IMR-90 (cell line): ENCODE measurements at regions of chr21 and their contacts with region 1.

Region 1: DNA sequence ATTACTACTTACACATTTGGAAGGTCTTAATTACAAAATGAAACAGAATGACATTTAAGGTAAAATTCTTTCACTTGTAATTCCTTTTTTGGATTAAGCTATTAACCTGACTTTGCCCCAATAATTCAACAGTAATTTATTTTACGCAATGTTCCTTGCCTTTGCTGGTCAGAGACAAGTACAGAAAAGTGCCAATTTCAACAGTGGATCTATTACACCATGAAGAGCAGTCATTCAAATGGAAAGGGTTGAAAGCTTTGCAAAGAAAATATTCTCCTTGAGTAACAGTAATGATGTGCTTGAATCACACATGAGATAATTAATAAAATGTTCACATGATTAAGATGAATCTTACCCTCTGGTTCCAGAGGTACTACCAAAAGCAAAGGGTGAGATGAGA is 84.7 kb downstream of the APP start:
- DNase-seq: no peak
- ATAC-seq: no peak
- H3K4me3 ChIP-seq: no peak overlapping the region
- H3K27ac ChIP-seq: no peak overlapping the region
- H3K4me1 ChIP-seq: peaks cover 4% of the 10 kb centered on the region
- H3K27me3 ChIP-seq: no peaks in the 10 kb centered on the region
- CTCF ChIP-seq: no peak
- POLR2A ChIP-seq: no peak
- RAD21 ChIP-seq: no peak

Region 2: DNA sequence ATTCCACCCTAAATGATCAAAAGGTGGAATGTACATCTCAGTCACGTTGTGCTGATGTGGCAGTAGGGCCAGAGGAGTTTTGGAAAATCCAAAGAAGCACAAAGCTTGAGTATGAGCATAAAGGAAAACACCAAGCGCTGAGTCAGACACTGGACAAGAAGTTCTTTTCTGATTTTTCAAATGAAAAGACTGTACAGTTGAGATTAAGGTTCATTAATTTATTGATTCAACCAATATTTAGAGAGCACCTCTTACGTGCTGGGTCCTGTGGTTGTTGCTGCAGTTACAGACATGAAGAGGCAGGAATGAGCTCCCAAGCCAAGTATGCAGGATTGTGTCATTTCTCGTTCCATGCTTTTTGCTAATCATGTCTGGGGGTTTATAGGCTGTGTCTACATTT is 113.6 kb after region 1 on chr21:
- CTCF ChIA-PET with region 1: no interaction called
- POLR2A ChIA-PET with region 1: interaction called, 12 read pairs
- dilution Hi-C with region 1: no loop called
- in situ Hi-C with region 1: no loop called
- intact Hi-C with region 1: no loop called
- DNase-seq: peak; percentile 82
- ATAC-seq: peak; percentile 94
- H3K4me3 ChIP-seq: no peak overlapping the region
- H3K27ac ChIP-seq: peak overlapping the region; percentile 69
- H3K4me1 ChIP-seq: no peaks in the 10 kb centered on the region
- H3K27me3 ChIP-seq: no peaks in the 10 kb centered on the region
- CTCF ChIP-seq: no peak
- POLR2A ChIP-seq: no peak
- RAD21 ChIP-seq: no peak